A673 (cell line): ENCODE measurements at regions of chr1 and their contacts with region 1.

Region 1: DNA sequence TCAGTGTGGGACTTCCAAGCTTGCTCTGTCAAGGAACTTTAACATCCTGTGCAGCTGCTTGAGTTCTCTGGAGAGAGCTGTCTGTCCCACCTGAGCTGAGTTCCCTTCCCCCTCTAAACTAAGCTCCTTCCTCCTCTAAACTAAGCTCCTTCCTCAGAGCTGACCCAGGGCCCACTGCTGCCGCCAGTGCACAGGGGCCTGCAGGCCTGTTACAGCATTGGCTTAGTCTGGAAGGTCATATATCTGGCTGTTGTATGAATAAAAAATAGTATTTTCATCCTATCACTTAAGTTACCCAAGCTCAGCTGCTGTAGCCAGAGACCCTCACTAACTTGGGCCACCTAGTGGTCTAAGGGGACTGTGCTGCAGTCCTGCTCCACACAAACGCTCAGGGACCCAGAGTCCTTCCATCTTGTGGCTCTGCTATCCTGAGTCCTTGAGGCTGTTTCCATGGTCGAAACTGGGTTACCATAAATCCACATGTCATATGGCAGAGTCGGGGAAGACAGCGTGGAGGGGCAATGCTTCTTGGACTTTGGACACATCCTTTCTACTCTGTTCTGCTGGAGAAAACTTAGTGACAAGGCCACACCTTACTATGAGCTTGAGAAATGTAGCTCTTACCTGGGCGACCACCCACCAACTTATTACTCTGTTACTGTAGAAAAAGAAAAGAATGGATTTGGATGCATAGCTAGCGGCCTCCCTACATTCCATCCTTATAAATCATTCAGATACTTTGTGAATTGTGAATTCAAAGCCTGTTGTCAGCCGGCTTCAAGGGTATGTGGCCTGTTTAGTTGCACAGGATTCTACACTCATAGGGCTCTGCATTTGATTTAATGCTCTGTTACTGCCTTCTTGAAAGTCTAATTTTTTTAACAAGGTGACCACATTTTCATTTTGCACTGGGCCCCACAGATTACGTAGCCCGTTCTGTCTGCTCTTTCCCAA is 71.4 kb upstream of the GCLM start:
- DNase-seq: peak; percentile 50
- H3K4me3 ChIP-seq: no peak overlapping the region
- H3K27ac ChIP-seq: no peak overlapping the region
- H3K4me1 ChIP-seq: no peaks in the 10 kb centered on the region
- H3K27me3 ChIP-seq: no peaks in the 10 kb centered on the region
- CTCF ChIP-seq: peak; percentile 71

Region 2: DNA sequence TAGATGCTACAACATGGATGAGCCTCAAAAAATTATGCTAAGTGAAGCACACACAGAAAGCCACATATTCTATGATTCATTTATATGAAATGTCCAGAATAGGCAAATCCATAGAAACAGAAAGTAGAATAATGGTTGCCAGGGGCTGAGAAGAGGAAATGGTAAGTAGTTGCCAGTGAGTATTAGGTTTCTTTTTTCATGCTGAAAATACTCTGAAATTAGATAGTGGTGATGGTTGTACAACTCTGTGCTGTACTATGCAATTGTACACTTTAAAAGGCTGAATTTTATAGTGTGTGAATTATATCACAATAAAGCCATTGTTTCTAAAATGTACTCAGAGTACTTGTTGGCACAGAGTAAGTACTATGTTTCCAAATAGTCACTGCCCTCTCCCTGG is 1478.3 kb before region 1 on chr1:
- CTCF ChIA-PET with region 1: no interaction called
- POLR2A ChIA-PET with region 1: no interaction called
- intact Hi-C with region 1: no loop called
- DNase-seq: no peak
- H3K4me3 ChIP-seq: no peak overlapping the region
- H3K27ac ChIP-seq: no peak overlapping the region
- H3K4me1 ChIP-seq: no peaks in the 10 kb centered on the region
- H3K27me3 ChIP-seq: no peaks in the 10 kb centered on the region
- CTCF ChIP-seq: no peak

Region 3: DNA sequence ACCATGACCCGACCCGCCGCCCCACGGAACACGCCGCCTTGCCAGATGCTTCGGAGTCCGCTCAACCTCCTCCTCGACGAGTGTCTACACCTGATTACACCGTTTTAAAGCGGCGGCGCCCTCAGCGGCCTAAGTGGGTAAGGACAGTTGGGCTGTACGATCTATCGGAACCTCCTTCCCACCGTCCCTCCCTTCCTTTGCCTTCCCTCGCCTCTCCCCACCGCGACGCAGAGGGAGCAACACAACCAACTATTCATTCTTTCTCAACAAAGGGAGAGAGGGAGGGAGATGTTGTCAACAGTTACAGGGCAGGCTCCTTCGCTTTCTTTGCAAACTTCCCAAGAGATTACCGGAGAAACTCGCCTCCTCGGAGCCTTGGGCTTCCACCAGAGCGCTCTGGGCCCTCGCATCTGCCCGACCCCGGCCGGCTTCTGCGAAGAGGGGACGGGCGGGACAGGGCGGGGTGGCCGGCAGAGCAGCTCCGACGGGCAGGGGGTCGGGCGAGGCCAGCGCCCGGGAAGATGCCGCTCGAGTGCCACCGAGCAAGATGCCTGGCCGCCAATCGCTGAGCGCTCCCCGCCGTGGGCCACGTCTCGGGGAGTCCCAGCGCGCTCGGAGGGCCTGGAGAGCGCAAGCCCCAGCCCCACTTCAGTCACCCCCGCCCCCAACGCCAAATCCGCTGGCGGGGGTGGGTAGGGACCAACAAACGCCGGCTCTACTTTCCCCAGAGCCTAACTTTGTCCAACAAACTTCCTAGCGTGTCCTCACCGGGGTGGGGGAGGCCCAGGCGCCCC is 299.6 kb before region 1 on chr1:
- CTCF ChIA-PET with region 1: no interaction called
- POLR2A ChIA-PET with region 1: no interaction called
- intact Hi-C with region 1: no loop called
- DNase-seq: peak; percentile 45
- H3K4me3 ChIP-seq: peak overlapping the region; percentile 57
- H3K27ac ChIP-seq: no peak overlapping the region
- H3K4me1 ChIP-seq: no peaks in the 10 kb centered on the region
- H3K27me3 ChIP-seq: peaks cover 25% of the 10 kb centered on the region
- CTCF ChIP-seq: peak; percentile 39; the same call in 1 of the 2 replicates

Region 4: GRCh38 chr1:93969371-93969770 is 11.2 kb before region 1 on chr1:
- CTCF ChIA-PET with region 1: interaction called, 12 read pairs
- POLR2A ChIA-PET with region 1: no interaction called
- intact Hi-C with region 1: no loop called
- DNase-seq: no peak
- H3K4me3 ChIP-seq: no peak overlapping the region
- H3K27ac ChIP-seq: no peak overlapping the region
- H3K4me1 ChIP-seq: no peaks in the 10 kb centered on the region
- H3K27me3 ChIP-seq: no peaks in the 10 kb centered on the region
- CTCF ChIP-seq: no peak

Region 5: GRCh38 chr1:94142022-94142421 is 161.4 kb after region 1 on chr1:
- CTCF ChIA-PET with region 1: no interaction called
- POLR2A ChIA-PET with region 1: no interaction called
- intact Hi-C with region 1: no loop called
- DNase-seq: no peak
- H3K4me3 ChIP-seq: no peak overlapping the region
- H3K27ac ChIP-seq: no peak overlapping the region
- H3K4me1 ChIP-seq: no peaks in the 10 kb centered on the region
- H3K27me3 ChIP-seq: no peaks in the 10 kb centered on the region
- CTCF ChIP-seq: no peak